ENCODE measurements at regions of chr1 and their contacts with region 1.

Region 1: GRCh38 chr1:114745291-114745690 is 12.5 kb downstream of the CSDE1 start:
- DNase-seq: peak; percentile 66
- ATAC-seq: no peak
- H3K4me3 ChIP-seq: no peak overlapping the region
- H3K27ac ChIP-seq: no peak overlapping the region
- H3K4me1 ChIP-seq: no peaks in the 10 kb centered on the region
- H3K27me3 ChIP-seq: no peaks in the 10 kb centered on the region
- CTCF ChIP-seq: no peak
- POLR2A ChIP-seq: no peak
- RAD21 ChIP-seq: no peak

Region 2: DNA sequence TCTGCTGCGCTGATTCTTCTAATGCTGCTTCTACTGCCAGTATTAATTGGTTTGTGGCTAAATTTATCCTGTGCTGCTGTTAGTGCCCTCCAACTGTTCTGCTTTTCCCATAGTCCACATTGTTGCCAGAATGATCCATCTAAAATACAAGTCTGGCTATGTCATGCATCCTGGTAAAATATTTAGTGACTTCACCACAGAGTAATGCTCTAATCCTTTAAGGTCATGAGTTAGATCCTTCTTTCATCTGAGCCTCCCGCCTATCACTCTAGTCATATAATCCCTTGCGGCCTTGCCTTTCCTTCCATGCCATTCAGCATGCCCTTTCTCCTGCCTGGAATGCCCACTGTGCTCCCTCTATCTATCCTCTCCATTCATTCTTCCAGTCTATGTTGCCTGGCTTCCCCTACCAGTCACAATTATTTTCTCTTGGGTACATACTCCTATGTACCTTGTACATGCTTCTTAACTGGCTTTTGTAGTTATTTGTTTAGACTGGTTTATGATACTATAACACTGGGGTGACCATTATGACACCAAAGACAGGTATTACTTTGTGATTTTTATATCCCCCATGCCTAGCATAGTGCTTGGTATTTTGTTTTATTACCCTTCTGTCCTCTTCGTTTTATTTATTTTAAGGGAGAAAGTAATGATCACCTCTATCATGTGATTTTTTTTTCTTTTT is 1211.0 kb before region 1 on chr1:
- CTCF ChIA-PET with region 1: no interaction called
- POLR2A ChIA-PET with region 1: no interaction called
- dilution Hi-C with region 1: no loop called
- in situ Hi-C with region 1: no loop called
- intact Hi-C with region 1: loop called (anchors 5 kb)
- DNase-seq: peak; percentile 84
- ATAC-seq: peak; percentile 82
- H3K4me3 ChIP-seq: no peak overlapping the region
- H3K27ac ChIP-seq: no peak overlapping the region
- H3K4me1 ChIP-seq: peaks cover 6% of the 10 kb centered on the region
- H3K27me3 ChIP-seq: no peaks in the 10 kb centered on the region
- CTCF ChIP-seq: no peak
- POLR2A ChIP-seq: no peak
- RAD21 ChIP-seq: no peak

Region 3: GRCh38 chr1:115302390-115302961 is 557.2 kb after region 1 on chr1:
- CTCF ChIA-PET with region 1: no interaction called
- POLR2A ChIA-PET with region 1: no interaction called
- dilution Hi-C with region 1: no loop called
- in situ Hi-C with region 1: loop called (anchors 25 kb)
- intact Hi-C with region 1: no loop called
- DNase-seq: peak; percentile 91
- ATAC-seq: peak; percentile 80
- H3K4me3 ChIP-seq: no peak overlapping the region
- H3K27ac ChIP-seq: peak overlapping the region; percentile 62
- H3K4me1 ChIP-seq: peaks cover 21% of the 10 kb centered on the region
- H3K27me3 ChIP-seq: no peaks in the 10 kb centered on the region
- CTCF ChIP-seq: no peak
- POLR2A ChIP-seq: no peak
- RAD21 ChIP-seq: no peak